Aorta (tissue), 5 donors: ENCODE measurements at regions of chrX and their contacts with region 1.

Region 1: DNA sequence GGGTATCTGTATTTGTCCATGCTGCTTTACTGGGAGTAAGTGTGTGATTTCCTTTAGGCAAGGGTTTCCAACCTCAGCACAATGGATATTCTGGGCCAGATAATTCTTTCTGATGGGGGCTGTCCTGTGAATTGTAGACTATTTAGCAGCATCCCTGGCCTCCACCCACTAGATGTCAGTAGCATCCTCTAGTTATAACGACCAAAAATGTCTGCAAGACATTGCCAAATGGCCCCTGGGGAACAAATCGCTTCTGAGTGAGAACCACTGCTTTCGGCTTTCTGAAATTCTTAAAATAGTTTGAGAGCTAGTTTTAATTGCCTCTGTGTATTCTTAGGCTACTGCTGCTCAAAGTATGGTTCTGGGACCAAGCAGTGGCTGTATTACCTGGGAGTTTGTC is 81.2 kb upstream of the GPM6B start:
- DNase-seq: no peak
- ATAC-seq: no peak
- H3K4me3 ChIP-seq: no peak overlapping the region
- H3K27ac ChIP-seq: no peak overlapping the region
- H3K4me1 ChIP-seq: peaks cover 2 to 7% of the 10 kb centered on the region in 2 donors
- H3K27me3 ChIP-seq: no peaks in the 10 kb centered on the region

Region 2: DNA sequence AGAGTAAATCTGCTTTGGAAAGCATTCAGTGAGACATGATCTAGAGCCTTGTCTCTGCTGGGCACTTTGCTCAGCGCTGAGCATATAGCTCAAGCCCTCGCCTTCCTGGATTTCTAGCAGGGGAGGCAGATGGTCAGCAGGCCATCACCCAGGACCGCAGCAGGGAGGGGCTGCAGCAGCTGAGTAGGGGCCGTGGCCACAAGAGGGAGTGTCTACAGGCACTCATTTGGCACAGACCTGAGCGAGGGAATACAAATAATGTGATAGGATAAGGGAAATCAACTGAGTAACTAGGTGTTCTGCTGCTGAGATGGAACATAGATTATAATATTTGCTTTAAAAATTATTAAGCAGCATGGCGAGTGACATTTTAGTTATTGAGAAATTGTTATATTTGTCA is 133.3 kb before region 1 on chrX:
- intact Hi-C with region 1: loop called in 1 of 2 experiments (anchors 10 kb)
- DNase-seq: no peak
- ATAC-seq: no peak
- H3K4me3 ChIP-seq: no peak overlapping the region
- H3K27ac ChIP-seq: no peak overlapping the region
- H3K4me1 ChIP-seq: peaks cover 0 to 2% of the 10 kb centered on the region in 2 donors
- H3K27me3 ChIP-seq: no peaks in the 10 kb centered on the region